ENCODE measurements at regions of chr12 and their contacts with region 1.

Region 1: GRCh38 chr12:49358483-49359141 is 8.7 kb upstream of the SPATS2 start:
- DNase-seq: peak in 7 of 9 experiments; percentile 47 to 87 (median 63)
- ATAC-seq: peak; percentile 99
- H3K4me3 ChIP-seq: no peak overlapping the region
- H3K4me3 Mint-ChIP-seq: no peak overlapping the region
- H3K27ac ChIP-seq: no peak overlapping the region
- H3K27ac Mint-ChIP-seq: no peak overlapping the region
- H3K4me1 ChIP-seq: no peaks in the 10 kb centered on the region
- H3K4me1 Mint-ChIP-seq: peaks cover 2% of the 10 kb centered on the region
- H3K27me3 ChIP-seq: peaks cover 4 to 8% of the 10 kb centered on the region in 2 experiments
- H3K27me3 Mint-ChIP-seq: peaks cover 20% of the 10 kb centered on the region
- CTCF ChIP-seq: peak; percentile 67

Region 2: GRCh38 chr12:49288412-49288853 is 70.2 kb before region 1 on chr12:
- CTCF ChIA-PET with region 1: interaction called, 30 read pairs
- POLR2A ChIA-PET with region 1: no interaction called
- intact Hi-C with region 1: no loop called
- DNase-seq: peak; percentile 52 to 82 (median 70)
- ATAC-seq: peak; percentile 89
- H3K4me3 ChIP-seq: no peak overlapping the region
- H3K4me3 Mint-ChIP-seq: no peak overlapping the region
- H3K27ac ChIP-seq: no peak overlapping the region
- H3K27ac Mint-ChIP-seq: no peak overlapping the region
- H3K4me1 ChIP-seq: no peaks in the 10 kb centered on the region
- H3K4me1 Mint-ChIP-seq: no peaks in the 10 kb centered on the region
- H3K27me3 ChIP-seq: peaks cover 0 to 4% of the 10 kb centered on the region in 2 experiments
- H3K27me3 Mint-ChIP-seq: peaks cover 29% of the 10 kb centered on the region
- CTCF ChIP-seq: peak; percentile 91

Region 3: GRCh38 chr12:49342066-49342913 is 16.3 kb before region 1 on chr12:
- CTCF ChIA-PET with region 1: interaction called, 56 read pairs
- POLR2A ChIA-PET with region 1: no interaction called
- intact Hi-C with region 1: no loop called
- DNase-seq: peak; percentile 39 to 84 (median 74)
- ATAC-seq: peak; percentile 66
- H3K4me3 ChIP-seq: peak overlapping the region; percentile 45 to 52
- H3K4me3 Mint-ChIP-seq: peak overlapping the region; percentile 73
- H3K27ac ChIP-seq: no peak overlapping the region
- H3K27ac Mint-ChIP-seq: no peak overlapping the region
- H3K4me1 ChIP-seq: peaks cover 43% of the 10 kb centered on the region
- H3K4me1 Mint-ChIP-seq: peaks cover 45% of the 10 kb centered on the region
- H3K27me3 ChIP-seq: peaks cover 22 to 55% of the 10 kb centered on the region in 2 experiments
- H3K27me3 Mint-ChIP-seq: peaks cover 42% of the 10 kb centered on the region
- CTCF ChIP-seq: peak; percentile 88

Region 4: DNA sequence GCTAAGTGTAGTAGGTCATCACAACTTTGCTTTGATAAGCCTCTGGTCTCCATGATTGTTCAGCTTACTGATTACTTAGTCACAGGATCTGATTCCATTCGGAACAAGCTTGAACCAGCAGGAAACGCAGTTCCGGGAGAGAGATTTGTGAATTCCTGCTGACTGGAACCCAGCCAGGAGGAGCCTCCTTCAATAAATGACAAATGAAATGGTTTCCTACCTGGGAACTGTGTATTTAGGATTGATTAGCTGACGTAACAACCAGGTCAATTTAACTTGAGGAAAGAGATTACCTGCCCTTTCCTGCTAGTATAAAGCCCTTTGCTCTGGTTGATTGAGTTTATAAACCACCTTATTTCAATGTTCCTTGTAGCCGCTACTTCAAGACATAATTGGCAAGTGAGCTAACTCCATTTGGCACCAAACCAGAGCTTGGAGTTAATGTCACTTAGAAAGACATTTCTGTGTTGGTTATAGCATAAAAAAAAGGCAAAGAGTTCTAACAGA is 145.1 kb after region 1 on chr12:
- CTCF ChIA-PET with region 1: interaction called, 23 read pairs
- POLR2A ChIA-PET with region 1: interaction called, 4 read pairs
- intact Hi-C with region 1: no loop called
- DNase-seq: no peak
- ATAC-seq: no peak
- H3K4me3 ChIP-seq: no peak overlapping the region
- H3K4me3 Mint-ChIP-seq: no peak overlapping the region
- H3K27ac ChIP-seq: no peak overlapping the region
- H3K27ac Mint-ChIP-seq: no peak overlapping the region
- H3K4me1 ChIP-seq: peaks cover 8% of the 10 kb centered on the region
- H3K4me1 Mint-ChIP-seq: peaks cover 17% of the 10 kb centered on the region
- H3K27me3 ChIP-seq: no peaks in the 10 kb centered on the region
- H3K27me3 Mint-ChIP-seq: no peaks in the 10 kb centered on the region
- CTCF ChIP-seq: no peak

Region 5: GRCh38 chr12:49553512-49554088 is 195.0 kb after region 1 on chr12:
- CTCF ChIA-PET with region 1: interaction called, 19 read pairs
- POLR2A ChIA-PET with region 1: no interaction called
- intact Hi-C with region 1: loop called in 1 of 2 experiments (anchors 1 kb)
- DNase-seq: peak in 2 of 9 experiments; percentile 60 to 70
- ATAC-seq: peak; percentile 68
- H3K4me3 ChIP-seq: no peak overlapping the region
- H3K4me3 Mint-ChIP-seq: no peak overlapping the region
- H3K27ac ChIP-seq: no peak overlapping the region
- H3K27ac Mint-ChIP-seq: peak overlapping the region; percentile 7
- H3K4me1 ChIP-seq: peaks cover 10% of the 10 kb centered on the region
- H3K4me1 Mint-ChIP-seq: peaks cover 23% of the 10 kb centered on the region
- H3K27me3 ChIP-seq: peaks cover 0 to 4% of the 10 kb centered on the region in 2 experiments
- H3K27me3 Mint-ChIP-seq: no peaks in the 10 kb centered on the region
- CTCF ChIP-seq: peak; percentile 53

Region 6: DNA sequence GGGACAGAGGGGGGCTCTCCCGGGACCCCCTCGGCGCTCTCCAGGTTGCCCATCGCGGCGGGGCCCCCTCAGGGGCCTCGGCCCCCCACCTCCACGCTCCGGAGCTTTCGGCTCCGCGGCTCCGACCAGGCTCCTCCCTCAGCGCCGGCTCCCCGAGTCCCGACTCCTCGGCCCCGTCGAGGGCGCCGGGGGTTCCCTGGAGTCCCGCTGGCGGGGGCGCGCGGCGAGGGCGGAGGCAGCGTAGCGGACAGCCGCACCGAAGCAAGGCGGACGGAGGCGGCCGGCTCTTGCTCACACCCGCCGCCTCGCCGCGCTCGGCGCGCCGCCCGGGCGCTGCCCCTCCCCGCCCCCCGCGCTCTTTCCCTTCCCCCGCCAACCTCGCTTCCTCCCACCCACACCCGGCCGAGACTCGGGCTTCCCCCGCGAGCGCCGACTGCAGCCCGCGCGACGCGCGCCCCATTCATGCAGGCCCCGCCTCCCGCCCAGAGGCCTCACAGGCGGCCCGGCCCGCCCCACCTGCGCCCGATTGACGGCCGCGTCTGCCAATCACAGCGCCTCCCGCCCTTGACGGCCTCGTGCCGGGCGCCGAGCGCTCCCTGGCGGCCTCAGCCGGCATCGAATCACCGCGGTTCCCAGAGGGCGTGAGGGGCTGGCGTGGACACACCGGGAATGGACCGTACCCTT is 348.7 kb after region 1 on chr12 and contains the start of gene FMNL3:
- CTCF ChIA-PET with region 1: interaction called, 7 read pairs
- POLR2A ChIA-PET with region 1: no interaction called
- intact Hi-C with region 1: loop called in 1 of 2 experiments (anchors 5 kb)
- DNase-seq: peak; percentile 98 to 100 (median 99)
- ATAC-seq: peak; percentile 93
- H3K4me3 ChIP-seq: peak within 1 kb of the TSS; percentile 70 to 84
- H3K4me3 Mint-ChIP-seq: peak within 1 kb of the TSS; percentile 92
- H3K27ac ChIP-seq: peak within 1 kb of the TSS; percentile 55 to 77
- H3K27ac Mint-ChIP-seq: peak within 1 kb of the TSS; percentile 90
- H3K4me1 ChIP-seq: peaks cover 32% of the 10 kb centered on the region
- H3K4me1 Mint-ChIP-seq: peaks cover 47% of the 10 kb centered on the region
- H3K27me3 ChIP-seq: no peaks in the 10 kb centered on the region
- H3K27me3 Mint-ChIP-seq: peaks cover 3% of the 10 kb centered on the region
- CTCF ChIP-seq: peak; percentile 97
- total RNA-seq, gene FMNL3: 27.9 to 31.9 TPM

Measured in CD8-positive, alpha-beta T cell (primary cell).